ENCODE measurements at regions of chr1 and their contacts with region 1.

Region 1: DNA sequence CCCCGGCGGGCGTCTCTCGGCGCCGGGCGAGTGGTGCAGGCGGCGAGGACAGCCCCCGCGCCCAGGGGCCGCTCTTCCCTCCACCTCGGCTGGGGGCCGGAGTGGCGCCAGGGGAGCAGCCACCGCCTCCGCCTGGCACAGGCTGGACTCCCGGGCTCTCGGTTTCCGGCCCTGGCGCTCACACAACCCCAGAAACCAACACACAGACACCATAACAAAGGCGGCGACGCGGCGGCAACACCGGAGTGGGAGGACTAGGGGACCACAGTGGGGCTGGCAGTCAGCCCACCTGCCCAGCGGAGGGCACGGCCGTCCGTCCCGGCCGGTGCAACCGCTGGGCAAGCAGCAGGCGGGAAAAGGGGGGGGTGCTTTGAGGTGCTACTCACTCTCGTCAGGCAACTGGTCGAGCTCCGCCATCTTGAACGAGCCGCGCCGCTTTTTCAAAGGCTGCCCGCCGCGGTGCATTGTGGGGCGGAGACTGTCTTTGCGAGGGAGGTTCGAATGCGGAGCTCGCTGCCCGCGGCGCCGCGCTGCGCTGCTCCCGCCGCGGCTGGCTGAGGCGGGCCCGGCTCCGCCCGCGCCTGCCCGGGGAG is at the start of gene LIN9:
- DNase-seq: peak; percentile 75 to 94
- H3K4me3 ChIP-seq: peak within 1 kb of the TSS; percentile 99
- H3K27ac ChIP-seq: peak within 1 kb of the TSS; percentile 40; the same call in 1 of the 2 replicates
- H3K4me1 ChIP-seq: peaks cover 24% of the 10 kb centered on the region
- H3K27me3 ChIP-seq: no peaks in the 10 kb centered on the region
- CTCF ChIP-seq: peak; percentile 24; the same call in 1 of the 2 replicates
- total RNA-seq, gene LIN9: 10.0 and 12.1 TPM in 2 replicates

Region 2: GRCh38 chr1:225460737-225461562 is 847.9 kb before region 1 on chr1:
- CTCF ChIA-PET with region 1: no interaction called
- POLR2A ChIA-PET with region 1: no interaction called
- intact Hi-C with region 1: loop called (anchors 5 kb)
- DNase-seq: peak; percentile 76 to 81
- H3K4me3 ChIP-seq: no peak overlapping the region
- H3K27ac ChIP-seq: peak overlapping the region; percentile 68
- H3K4me1 ChIP-seq: peaks cover 62% of the 10 kb centered on the region
- H3K27me3 ChIP-seq: no peaks in the 10 kb centered on the region
- CTCF ChIP-seq: no peak

Region 3: DNA sequence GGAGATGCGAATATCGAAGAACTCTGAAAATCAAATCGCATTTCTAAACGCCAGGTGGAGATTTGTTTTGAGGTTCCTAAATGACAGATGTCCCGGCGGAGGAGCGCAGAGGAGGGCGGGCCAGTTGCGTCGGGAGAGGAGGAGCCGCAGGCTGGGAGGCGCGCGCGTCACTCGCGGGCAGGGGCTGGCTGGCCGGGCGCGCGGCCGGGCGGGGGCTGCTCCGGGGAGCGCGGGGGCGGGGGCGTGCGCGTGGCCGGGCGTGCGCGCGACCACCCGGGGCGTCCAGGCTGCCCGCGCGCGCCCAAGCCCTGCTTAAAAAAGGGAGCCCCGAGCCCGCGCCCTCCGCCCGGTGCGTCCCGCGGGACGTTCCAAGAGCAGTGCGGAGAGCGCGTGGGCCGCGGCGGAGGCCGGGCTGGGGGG is 199.0 kb before region 1 on chr1:
- CTCF ChIA-PET with region 1: no interaction called
- POLR2A ChIA-PET with region 1: no interaction called
- intact Hi-C with region 1: no loop called
- DNase-seq: peak; percentile 70 to 91
- H3K4me3 ChIP-seq: peak overlapping the region; percentile 82
- H3K27ac ChIP-seq: peak overlapping the region; percentile 67
- H3K4me1 ChIP-seq: peaks cover 31% of the 10 kb centered on the region
- H3K27me3 ChIP-seq: no peaks in the 10 kb centered on the region
- CTCF ChIP-seq: no peak

Region 4: GRCh38 chr1:226325178-226325577 is 16.4 kb after region 1 on chr1:
- CTCF ChIA-PET with region 1: interaction called, 7 read pairs
- POLR2A ChIA-PET with region 1: interaction called, 6 read pairs
- intact Hi-C with region 1: loop called (anchors 1 kb)
- DNase-seq: peak; percentile 67 to 76
- H3K4me3 ChIP-seq: no peak overlapping the region
- H3K27ac ChIP-seq: no peak overlapping the region
- H3K4me1 ChIP-seq: peaks cover 30% of the 10 kb centered on the region
- H3K27me3 ChIP-seq: no peaks in the 10 kb centered on the region
- CTCF ChIP-seq: no peak